ENCODE measurements at regions of chr17 and their contacts with region 1.

Region 1: GRCh38 chr17:42980398-42981397 is at the start of gene RUNDC1:
- DNase-seq: peak; percentile 94 to 97 (median 95)
- ATAC-seq: peak; percentile 92 to 95 (median 92)
- H3K4me3 ChIP-seq: peak within 1 kb of the TSS; percentile 63 to 100 (median 92)
- H3K27ac ChIP-seq: peak within 1 kb of the TSS; percentile 11 to 93 (median 89)
- H3K4me1 ChIP-seq: peaks cover 0 to 40% (median 25%) of the 10 kb centered on the region in 12 donors
- H3K27me3 ChIP-seq: no peaks in the 10 kb centered on the region
- CTCF ChIP-seq: no peak
- POLR2A ChIP-seq: peak in 1 of 2 donors; percentile 40
- total RNA-seq, gene RUNDC1: 9.8 to 15.9 (median 11.4) TPM

Region 2: DNA sequence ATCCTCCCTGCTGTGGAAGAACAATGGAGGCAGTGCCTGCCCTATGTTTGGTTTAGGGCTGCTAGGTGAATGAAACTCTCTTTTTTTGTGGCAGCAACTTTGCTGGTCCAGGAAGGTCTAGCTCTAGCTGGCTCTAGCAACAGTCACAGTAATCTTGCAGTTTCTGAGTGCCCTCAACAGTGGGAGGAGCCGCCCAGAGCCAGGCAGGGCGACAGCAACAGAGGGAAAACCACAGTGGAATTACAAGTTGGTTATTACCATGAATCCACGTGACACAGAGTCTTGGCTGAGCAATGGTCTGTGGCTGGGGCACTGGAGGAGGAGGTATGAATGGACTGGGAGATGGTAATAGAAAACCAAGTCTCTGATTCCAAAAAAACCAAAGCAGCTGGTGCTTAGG is 847.8 kb before region 1 on chr17:
- intact Hi-C with region 1: no loop called
- DNase-seq: peak in 3 of 5 donors; percentile 65 to 70 (median 65)
- ATAC-seq: peak; percentile 28 to 56 (median 52)
- H3K4me3 ChIP-seq: peak overlapping the region in 1 of 12 donors; percentile 17
- H3K27ac ChIP-seq: peak overlapping the region; percentile 39 to 91 (median 78)
- H3K4me1 ChIP-seq: peaks cover 33 to 95% (median 84%) of the 10 kb centered on the region in 12 donors
- H3K27me3 ChIP-seq: no peaks in the 10 kb centered on the region
- CTCF ChIP-seq: no peak
- POLR2A ChIP-seq: peak in 1 of 2 donors; percentile 20

Region 3: GRCh38 chr17:42895185-42895555 is 85.5 kb before region 1 on chr17:
- intact Hi-C with region 1: no loop called
- DNase-seq: peak in 2 of 5 donors; percentile 39 to 67
- ATAC-seq: peak in 2 of 4 donors; percentile 63 to 65
- H3K4me3 ChIP-seq: no peak overlapping the region
- H3K27ac ChIP-seq: peak overlapping the region in 4 of 12 donors; percentile 3 to 84 (median 43)
- H3K4me1 ChIP-seq: peaks cover 5 to 56% (median 35%) of the 10 kb centered on the region in 12 donors
- H3K27me3 ChIP-seq: no peaks in the 10 kb centered on the region
- CTCF ChIP-seq: no peak
- POLR2A ChIP-seq: no peak

Region 4: GRCh38 chr17:42928714-42929496 is 51.8 kb before region 1 on chr17:
- intact Hi-C with region 1: no loop called
- DNase-seq: peak in 3 of 5 donors; percentile 26 to 54 (median 42)
- ATAC-seq: peak; percentile 75 to 94 (median 92)
- H3K4me3 ChIP-seq: peak overlapping the region in 1 of 12 donors; percentile 6
- H3K27ac ChIP-seq: peak overlapping the region in 9 of 12 donors; percentile 3 to 89 (median 57)
- H3K4me1 ChIP-seq: peaks cover 0 to 29% (median 9%) of the 10 kb centered on the region in 12 donors
- H3K27me3 ChIP-seq: no peaks in the 10 kb centered on the region
- CTCF ChIP-seq: peak; percentile 58 to 82 (median 64)
- POLR2A ChIP-seq: no peak

Region 5: GRCh38 chr17:42953669-42954068 is 27.0 kb before region 1 on chr17:
- intact Hi-C with region 1: loop called in 1 of 10 experiments (anchors 2 kb)
- DNase-seq: no peak
- ATAC-seq: peak in 1 of 4 donors; percentile 66
- H3K4me3 ChIP-seq: no peak overlapping the region
- H3K27ac ChIP-seq: no peak overlapping the region
- H3K4me1 ChIP-seq: no peaks in the 10 kb centered on the region
- H3K27me3 ChIP-seq: no peaks in the 10 kb centered on the region
- CTCF ChIP-seq: no peak
- POLR2A ChIP-seq: no peak

Region 6: DNA sequence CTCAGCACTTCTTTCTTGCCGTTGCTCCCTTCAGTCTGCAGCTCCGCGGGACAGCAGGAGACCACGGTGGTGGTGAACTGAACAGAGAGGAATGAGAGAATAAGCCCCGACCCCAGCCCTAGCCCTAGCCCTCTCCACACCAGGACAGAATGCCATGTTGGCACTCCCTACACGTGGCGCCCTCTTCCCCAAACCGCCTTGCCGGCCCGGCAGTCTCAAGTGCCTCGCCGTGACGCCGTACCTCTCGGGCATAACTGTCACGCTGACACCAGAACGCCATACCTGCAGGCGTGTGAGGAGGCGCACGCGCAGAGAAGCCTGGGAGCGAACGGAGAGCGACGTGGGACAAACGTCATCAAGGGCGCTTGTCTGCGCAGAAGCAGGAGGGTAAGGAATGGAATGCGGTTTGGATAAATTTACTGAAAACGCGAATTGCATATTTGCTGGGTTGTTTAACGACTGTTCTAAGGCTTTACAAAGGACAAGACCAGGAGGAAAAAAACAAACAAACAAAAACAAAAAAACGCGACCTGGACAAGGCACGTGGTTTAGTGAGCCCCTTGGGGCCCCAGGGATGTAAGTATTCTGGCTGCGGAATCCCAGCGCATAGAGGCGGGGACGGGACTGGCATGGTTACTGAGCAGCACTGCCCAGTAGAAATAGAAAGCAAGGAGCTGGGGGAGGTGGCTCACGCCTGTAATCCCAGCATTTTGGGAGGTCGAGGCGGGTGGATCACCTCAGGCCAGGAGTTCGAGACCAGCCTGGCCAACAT is 16.4 kb before region 1 on chr17 and contains the start of gene AARSD1:
- intact Hi-C with region 1: loop called in 1 of 10 experiments (anchors 1 kb)
- DNase-seq: peak; percentile 91 to 94 (median 93)
- ATAC-seq: peak; percentile 96 to 99 (median 97)
- H3K4me3 ChIP-seq: peak within 1 kb of the TSS; percentile 40 to 96 (median 77)
- H3K27ac ChIP-seq: peak within 1 kb of the TSS in 11 of 12 donors; percentile 72 to 92 (median 87)
- H3K4me1 ChIP-seq: peaks cover 0 to 14% (median 6%) of the 10 kb centered on the region in 12 donors
- H3K27me3 ChIP-seq: no peaks in the 10 kb centered on the region
- CTCF ChIP-seq: peak in 1 of 12 donors; percentile 13
- POLR2A ChIP-seq: peak in 1 of 2 donors; percentile 70
- total RNA-seq, gene AARSD1: 19.5 to 33.3 (median 26.2) TPM

Measured in heart left ventricle (tissue), 16 donors.